H1 (cell line): ENCODE measurements at regions of chr1 and their contacts with region 1.

Region 1: DNA sequence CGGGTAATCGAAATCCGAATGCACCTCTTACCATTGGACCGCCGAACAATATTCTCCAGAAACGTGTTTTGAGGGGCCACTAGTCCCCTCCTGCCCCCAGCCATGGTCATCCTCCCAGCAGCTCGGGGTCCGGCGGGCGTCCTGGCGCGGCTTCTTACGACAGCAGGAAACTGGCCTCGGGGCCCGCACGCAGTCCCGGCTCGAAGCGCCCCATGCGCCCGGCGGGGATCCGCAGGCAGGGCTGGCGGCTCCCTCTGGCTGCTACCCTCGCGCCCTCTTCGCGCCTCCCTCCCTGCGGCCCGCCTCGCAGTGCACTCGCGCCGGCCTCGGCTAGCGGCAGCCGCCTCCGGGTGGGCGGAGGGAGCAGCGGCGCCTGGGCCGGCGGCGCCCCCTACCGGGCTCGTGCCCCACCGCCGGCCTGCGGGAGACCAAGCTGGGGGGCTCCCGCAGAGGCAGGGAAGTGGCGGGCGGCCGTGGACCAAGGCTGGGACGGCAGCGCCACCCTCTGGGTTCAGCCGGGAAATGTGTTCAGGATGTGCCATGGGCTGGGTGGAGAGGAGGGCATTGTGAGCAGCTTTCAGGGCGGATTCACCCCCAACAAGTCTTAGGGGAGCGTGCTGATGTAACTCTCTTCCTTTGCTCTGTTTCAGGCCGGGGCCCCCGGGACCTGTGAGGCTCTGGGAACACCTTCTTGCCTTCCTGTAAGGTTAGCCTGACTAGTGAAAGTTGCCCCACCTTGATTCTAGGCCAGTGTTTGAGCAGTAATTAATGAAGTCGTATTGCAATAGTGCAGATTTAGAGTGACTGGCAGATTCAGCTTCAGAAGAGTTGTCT is at the start of gene KCNH1:
- DNase-seq: peak; percentile 75 to 96
- H3K4me3 ChIP-seq: peak within 1 kb of the TSS; percentile 48 to 79 (median 64)
- H3K27ac ChIP-seq: no peak within 1 kb of the TSS
- H3K4me1 ChIP-seq: peaks cover 2 to 10% (median 3%) of the 10 kb centered on the region in 4 experiments; a peak in 4 of 7 replicates
- H3K27me3 ChIP-seq: peaks cover 8 to 18% (median 14%) of the 10 kb centered on the region in 4 experiments
- CTCF ChIP-seq: peak; percentile 89 to 98 (median 95)
- EP300 ChIP-seq: peak in 1 of 2 experiments; percentile 75; a peak in 1 of 3 replicates
- POLR2A ChIP-seq: no peak
- RAD21 ChIP-seq: peak; percentile 91 to 96
- total RNA-seq, gene KCNH1: 0.34 and 0.38 TPM in 2 replicates

Region 2: DNA sequence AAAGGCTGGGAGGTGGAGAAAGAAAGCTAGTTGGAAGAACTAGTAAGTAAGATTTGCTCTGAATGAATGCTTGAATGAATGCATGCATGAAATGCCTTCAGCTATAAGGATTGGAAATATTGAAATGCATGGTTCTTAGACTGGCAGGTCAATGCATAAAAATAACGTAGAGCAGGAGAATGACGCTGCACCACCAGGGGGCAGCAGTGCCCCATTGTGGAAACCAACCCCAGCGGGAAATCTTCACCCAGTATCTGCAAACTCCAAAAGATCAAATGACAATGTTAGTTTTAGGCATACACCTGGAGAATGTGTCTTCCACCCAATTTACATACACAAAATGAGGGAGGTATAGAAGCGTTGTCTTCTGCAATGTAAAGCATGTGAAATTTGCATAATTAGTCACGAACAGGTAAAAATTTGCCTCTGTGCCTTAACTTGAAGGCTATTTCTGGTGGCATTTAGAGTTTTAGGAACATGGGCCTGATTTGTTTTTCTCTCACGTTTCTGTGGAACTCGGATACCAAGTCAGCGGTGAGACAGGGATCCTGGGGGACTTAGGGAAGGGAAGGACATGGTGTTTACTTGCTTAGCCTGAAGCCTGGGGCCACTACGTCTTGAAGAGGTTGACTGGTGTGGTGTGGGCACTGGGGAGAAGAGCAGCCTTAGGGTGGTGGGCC is 726.7 kb before region 1 on chr1:
- CTCF ChIA-PET with region 1: interaction called, 59 read pairs
- POLR2A ChIA-PET with region 1: no interaction called
- DNase-seq: peak; percentile 41 to 95
- H3K4me3 ChIP-seq: no peak overlapping the region
- H3K27ac ChIP-seq: no peak overlapping the region
- H3K4me1 ChIP-seq: peaks cover 0 to 6% (median 2%) of the 10 kb centered on the region in 4 experiments; a peak in 3 of 7 replicates
- H3K27me3 ChIP-seq: no peaks in the 10 kb centered on the region
- CTCF ChIP-seq: peak; percentile 79 to 85 (median 84)
- EP300 ChIP-seq: no peak
- POLR2A ChIP-seq: no peak
- RAD21 ChIP-seq: peak; percentile 93 to 94

Region 3: DNA sequence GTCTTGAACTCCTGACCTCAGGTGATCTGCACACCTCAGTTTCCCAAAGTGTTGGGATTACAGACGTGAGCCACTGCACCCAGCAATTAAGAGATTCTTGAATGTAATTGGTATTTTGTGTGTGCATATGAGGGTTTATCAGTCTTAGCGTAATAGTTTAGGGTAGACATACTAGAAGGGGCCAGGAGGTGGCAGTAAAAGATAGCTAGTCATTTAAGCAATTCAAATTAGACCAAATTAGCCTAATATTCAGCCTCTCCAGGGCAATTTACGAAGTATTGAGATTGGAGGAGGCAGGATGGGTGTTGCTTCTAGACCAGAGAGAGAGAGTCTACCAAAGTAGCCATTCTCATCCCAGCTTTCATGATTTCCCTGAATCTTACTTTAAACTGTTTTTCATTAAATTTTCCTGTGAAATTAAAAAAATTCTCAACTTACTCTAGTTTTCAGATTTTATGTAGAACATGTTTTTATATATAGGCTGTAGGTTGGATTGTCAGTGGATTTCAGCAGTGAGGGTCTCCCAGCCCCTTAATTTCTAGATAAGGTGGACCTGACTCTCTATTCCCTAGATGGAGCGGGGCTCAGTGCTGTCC is 685.7 kb before region 1 on chr1:
- CTCF ChIA-PET with region 1: interaction called, 79 read pairs
- POLR2A ChIA-PET with region 1: interaction called, 6 read pairs
- DNase-seq: no peak
- H3K4me3 ChIP-seq: no peak overlapping the region
- H3K27ac ChIP-seq: no peak overlapping the region
- H3K4me1 ChIP-seq: peaks cover 0 to 5% (median 0%) of the 10 kb centered on the region in 4 experiments; a peak in 1 of 7 replicates
- H3K27me3 ChIP-seq: no peaks in the 10 kb centered on the region; a peak in 1 of 7 replicates
- CTCF ChIP-seq: peak in 2 of 3 experiments; percentile 55 to 76; a peak in 2 of 4 replicates
- EP300 ChIP-seq: no peak
- POLR2A ChIP-seq: no peak
- RAD21 ChIP-seq: peak; percentile 89 to 90

Region 4: DNA sequence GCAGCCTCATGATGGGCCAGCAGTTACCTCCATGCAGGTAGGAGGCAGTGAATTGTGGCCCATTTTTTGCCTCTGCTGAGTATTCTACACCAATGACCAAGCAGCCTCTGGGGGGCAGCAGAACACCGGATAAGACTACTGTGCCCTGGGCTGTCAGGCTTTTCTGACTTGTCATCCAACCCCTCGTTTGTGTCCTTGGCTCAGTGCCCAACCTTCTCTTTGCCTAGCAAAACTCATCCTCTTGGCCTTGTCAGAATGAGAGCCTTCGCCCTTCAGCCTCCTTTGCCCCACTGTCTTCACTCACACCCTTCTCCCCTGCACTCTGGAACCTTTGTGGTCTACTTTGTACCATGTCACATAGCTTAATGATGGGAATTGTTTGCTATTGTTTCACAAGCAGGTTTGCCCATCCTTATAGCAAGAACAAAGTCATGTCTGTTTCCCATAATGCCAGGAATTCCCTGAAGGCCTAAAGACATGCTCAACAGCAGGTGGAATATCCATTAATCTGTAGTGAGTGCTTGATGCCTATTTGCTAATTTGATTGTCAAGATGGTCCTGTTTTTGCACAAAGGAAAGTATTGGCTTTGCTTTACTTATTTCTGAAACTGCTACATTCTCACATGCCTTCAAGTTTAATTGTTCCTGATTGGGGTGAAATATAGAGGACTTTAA is 549.5 kb before region 1 on chr1:
- CTCF ChIA-PET with region 1: interaction called, 109 read pairs
- POLR2A ChIA-PET with region 1: interaction called, 5 read pairs
- DNase-seq: peak; percentile 63 to 91
- H3K4me3 ChIP-seq: no peak overlapping the region
- H3K27ac ChIP-seq: no peak overlapping the region
- H3K4me1 ChIP-seq: peaks cover 0 to 3% (median 0%) of the 10 kb centered on the region in 4 experiments; a peak in 1 of 7 replicates
- H3K27me3 ChIP-seq: no peaks in the 10 kb centered on the region
- CTCF ChIP-seq: peak; percentile 64 to 95 (median 90)
- EP300 ChIP-seq: no peak
- POLR2A ChIP-seq: no peak
- RAD21 ChIP-seq: peak; percentile 98 to 100

Region 5: GRCh38 chr1:211118407-211119102 is 15.5 kb before region 1 on chr1:
- CTCF ChIA-PET with region 1: interaction called, 12 read pairs
- POLR2A ChIA-PET with region 1: no interaction called
- DNase-seq: no peak
- H3K4me3 ChIP-seq: no peak overlapping the region
- H3K27ac ChIP-seq: no peak overlapping the region
- H3K4me1 ChIP-seq: no peaks in the 10 kb centered on the region
- H3K27me3 ChIP-seq: no peaks in the 10 kb centered on the region
- CTCF ChIP-seq: no peak
- EP300 ChIP-seq: no peak
- POLR2A ChIP-seq: no peak
- RAD21 ChIP-seq: no peak